ENCODE measurements at regions of chr6 and their contacts with region 1.

Region 1: GRCh38 chr6:25138237-25139125 is 140.7 kb upstream of the CARMIL1 start:
- DNase-seq: peak; percentile 29 to 76
- ATAC-seq: peak; percentile 80 to 93 (median 92)
- H3K4me3 ChIP-seq: peak overlapping the region; percentile 31 to 57 (median 49)
- H3K27ac ChIP-seq: peak overlapping the region; percentile 73 to 93 (median 88)
- H3K4me1 ChIP-seq: peaks cover 0 to 34% (median 20%) of the 10 kb centered on the region in 9 donors
- H3K27me3 ChIP-seq: no peaks in the 10 kb centered on the region
- CTCF ChIP-seq: peak in 5 of 9 donors; percentile 15 to 40 (median 25)

Region 2: DNA sequence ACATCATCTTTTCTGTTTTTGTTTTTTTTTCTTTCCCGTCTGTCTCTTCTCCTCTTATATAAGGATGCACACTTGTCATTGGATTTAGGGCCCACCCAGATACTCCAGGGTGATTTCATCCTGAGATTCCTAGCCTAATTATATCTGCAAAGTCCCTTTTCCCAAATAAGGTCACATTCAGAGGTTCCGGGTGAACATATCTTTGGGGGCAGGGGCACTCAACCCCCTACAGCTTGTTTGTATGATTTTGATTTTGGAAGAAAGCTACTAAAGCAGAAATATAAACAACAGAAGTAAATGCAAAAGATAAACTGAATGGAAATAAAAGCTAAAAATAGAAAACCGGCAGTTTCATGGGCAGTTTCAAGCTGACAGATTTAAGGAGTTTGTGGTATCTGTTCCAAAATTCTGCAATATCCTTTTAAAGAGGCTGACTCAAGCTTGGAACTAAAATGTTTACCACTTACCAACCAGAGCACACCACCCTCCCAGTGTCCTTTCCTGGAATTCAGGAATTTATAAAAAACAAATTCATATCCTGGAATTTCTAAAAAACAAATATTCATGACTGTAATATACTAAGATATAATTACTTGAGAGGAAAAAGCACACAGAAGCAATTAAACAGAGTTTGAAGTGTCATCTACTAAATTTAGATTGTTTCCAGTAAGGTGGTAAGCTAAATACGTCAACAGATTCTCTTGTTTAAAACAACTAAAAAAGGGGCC is 40.7 kb after region 1 on chr6:
- intact Hi-C with region 1: loop called in 4 of 10 experiments (anchors 5 kb)
- DNase-seq: no peak
- ATAC-seq: peak; percentile 55 to 90 (median 80)
- H3K4me3 ChIP-seq: no peak overlapping the region
- H3K27ac ChIP-seq: peak overlapping the region; percentile 30 to 82 (median 64)
- H3K4me1 ChIP-seq: peaks cover 0 to 69% (median 14%) of the 10 kb centered on the region in 9 donors
- H3K27me3 ChIP-seq: no peaks in the 10 kb centered on the region
- CTCF ChIP-seq: no peak

Region 3: GRCh38 chr6:25193460-25194171 is 55.1 kb after region 1 on chr6:
- intact Hi-C with region 1: loop called in 3 of 10 experiments (anchors 1 to 10 kb)
- DNase-seq: peak in 1 of 2 donors; percentile 56
- ATAC-seq: peak in 7 of 8 donors; percentile 50 to 81 (median 75)
- H3K4me3 ChIP-seq: peak overlapping the region in 3 of 10 donors; percentile 0 to 15 (median 3)
- H3K27ac ChIP-seq: peak overlapping the region; percentile 20 to 85 (median 73)
- H3K4me1 ChIP-seq: peaks cover 0 to 40% (median 17%) of the 10 kb centered on the region in 9 donors
- H3K27me3 ChIP-seq: no peaks in the 10 kb centered on the region
- CTCF ChIP-seq: no peak

Region 4: DNA sequence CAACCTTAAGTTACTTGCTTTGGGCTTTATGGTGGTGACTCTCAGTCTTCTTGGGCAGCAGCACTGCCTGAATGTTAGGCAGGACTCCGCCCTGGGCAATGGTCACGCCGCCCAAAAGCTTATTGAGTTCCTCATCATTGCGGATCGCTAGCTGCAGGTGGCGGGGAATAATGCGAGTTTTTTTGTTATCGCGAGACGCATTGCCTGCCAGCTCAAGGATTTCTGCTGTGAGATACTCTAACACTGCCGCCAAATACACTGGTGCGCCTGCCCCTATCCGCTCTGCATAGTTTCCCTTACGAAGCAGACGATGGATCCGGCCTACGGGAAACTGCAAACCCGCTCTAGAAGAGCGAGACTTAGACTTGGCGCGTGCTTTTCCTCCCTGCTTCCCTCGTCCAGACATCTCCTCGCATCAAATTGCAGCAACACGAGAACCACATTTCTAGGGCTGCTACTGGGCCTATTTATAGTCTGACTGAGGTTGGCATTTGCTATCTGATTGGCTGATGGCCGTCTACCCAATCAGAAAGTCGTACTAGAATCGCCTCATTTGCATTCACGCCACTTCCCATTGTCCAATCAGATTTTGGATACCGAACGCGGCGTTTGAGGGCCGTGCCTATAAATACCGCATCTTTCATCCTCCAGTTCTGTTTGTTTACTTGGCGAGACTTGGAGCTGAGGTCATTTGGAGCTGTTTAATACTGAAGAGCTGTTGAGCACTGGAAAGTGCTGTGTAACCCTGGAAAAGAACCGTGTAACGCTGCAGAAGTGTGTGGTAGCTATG is 587.8 kb after region 1 on chr6:
- intact Hi-C with region 1: no loop called
- DNase-seq: no peak
- ATAC-seq: no peak
- H3K4me3 ChIP-seq: no peak overlapping the region
- H3K27ac ChIP-seq: no peak overlapping the region
- H3K4me1 ChIP-seq: no peaks in the 10 kb centered on the region
- H3K27me3 ChIP-seq: peaks cover 0 to 40% (median 10%) of the 10 kb centered on the region in 7 donors
- CTCF ChIP-seq: no peak

Measured in heart right ventricle (tissue), 16 donors.